Ascending aorta (tissue), 2 donors: ENCODE measurements at regions of chr5 and their contacts with region 1.

Region 1: DNA sequence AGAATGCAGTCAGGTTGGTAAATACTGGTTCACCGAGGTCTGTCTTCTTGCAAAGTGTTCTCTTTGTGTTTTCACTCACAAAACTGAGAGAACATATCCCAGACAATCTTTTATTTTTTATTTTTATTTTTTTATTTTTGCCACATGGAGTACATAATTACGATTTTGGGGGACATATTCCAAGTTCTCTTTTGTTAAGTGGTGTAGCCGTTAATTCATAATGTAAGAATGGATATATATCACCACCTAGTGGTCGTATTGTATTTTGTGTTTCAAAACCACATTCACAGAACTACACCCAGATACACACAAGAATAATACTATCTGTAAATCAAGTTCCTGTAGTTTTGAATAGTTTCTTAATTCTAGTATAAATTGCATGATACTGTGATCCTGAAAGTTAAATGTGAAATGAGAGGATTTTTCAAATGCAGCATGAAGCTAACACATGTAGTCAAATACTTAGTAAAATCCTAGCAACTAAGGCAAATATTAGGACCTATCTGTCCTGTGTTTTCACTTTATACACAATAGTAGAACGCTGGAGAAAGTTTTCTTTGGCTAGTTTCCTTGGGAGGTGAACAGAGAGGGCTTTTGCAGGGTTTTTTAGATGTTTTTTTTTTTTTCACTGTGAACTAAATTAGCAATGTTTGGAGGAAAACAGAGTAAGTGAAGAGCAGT is 92.7 kb downstream of the VCAN start:
- DNase-seq: no peak
- H3K4me3 ChIP-seq: no peak overlapping the region
- H3K27ac ChIP-seq: peak overlapping the region; percentile 19 to 77
- H3K4me1 ChIP-seq: peaks cover 8 to 52% of the 10 kb centered on the region in 2 donors
- H3K27me3 ChIP-seq: no peaks in the 10 kb centered on the region
- CTCF ChIP-seq: peak; percentile 51 to 67 (median 57)

Region 2: DNA sequence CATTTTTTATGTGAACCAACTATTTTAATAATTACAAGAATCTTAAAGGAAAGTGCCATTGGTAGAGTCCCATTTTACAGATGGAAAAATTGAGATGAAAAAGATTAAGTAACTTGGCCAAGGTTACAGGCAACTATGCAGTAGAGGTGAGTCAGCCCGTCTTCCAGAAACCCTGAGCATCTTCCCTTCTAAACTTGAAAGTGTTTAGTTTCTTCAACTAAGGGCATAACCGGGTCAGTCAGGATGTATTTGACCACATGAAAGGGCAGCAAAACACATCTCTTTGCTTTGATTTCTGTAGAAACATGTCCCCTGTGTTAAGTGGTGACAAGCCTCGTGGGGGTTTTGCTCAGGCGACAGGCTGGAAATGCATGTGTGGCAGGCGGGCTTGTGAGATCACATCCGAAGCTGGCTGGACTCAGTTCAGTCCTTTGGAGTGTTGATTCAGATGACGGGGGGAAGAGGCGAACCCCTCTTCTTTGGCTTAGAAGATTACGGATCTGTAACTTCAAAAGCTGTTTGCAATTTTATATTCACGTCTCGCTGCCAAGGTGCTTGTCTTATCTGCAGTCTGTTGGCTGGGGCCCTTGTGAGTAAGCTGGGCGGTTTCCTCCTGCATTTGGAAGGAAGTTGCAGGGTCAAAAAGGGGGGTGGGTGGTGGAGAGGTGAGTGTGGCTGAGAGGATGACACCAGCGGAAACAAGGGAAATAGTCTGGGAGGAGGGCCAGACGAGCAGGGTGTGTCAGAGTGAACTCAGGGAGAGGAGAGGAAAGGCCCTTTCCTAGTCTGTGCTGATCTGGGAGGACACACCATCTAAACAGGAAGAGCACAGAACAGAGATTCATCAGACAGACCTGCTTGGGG is 1207.2 kb before region 1 on chr5:
- intact Hi-C with region 1: loop called (anchors 5 kb)
- DNase-seq: peak; percentile 33 to 94
- H3K4me3 ChIP-seq: no peak overlapping the region
- H3K27ac ChIP-seq: peak overlapping the region; percentile 78 to 84
- H3K4me1 ChIP-seq: peaks cover 0 to 29% of the 10 kb centered on the region in 2 donors
- H3K27me3 ChIP-seq: no peaks in the 10 kb centered on the region
- CTCF ChIP-seq: no peak

Region 3: GRCh38 chr5:83076742-83077661 is 487.2 kb before region 1 on chr5 and contains the starts of genes TMEM167A and XRCC4:
- intact Hi-C with region 1: loop called (anchors 5 kb)
- DNase-seq: peak; percentile 94 to 98
- H3K4me3 ChIP-seq: peak within 1 kb of the TSS; percentile 86 to 94
- H3K27ac ChIP-seq: peak within 1 kb of the TSS; percentile 89 to 90
- H3K4me1 ChIP-seq: peaks cover 0 to 17% of the 10 kb centered on the region in 2 donors
- H3K27me3 ChIP-seq: no peaks in the 10 kb centered on the region
- CTCF ChIP-seq: no peak
- total RNA-seq, gene TMEM167A: 38.3 TPM
- total RNA-seq, gene XRCC4: not detected

Region 4: GRCh38 chr5:83306572-83307241 is 257.5 kb before region 1 on chr5:
- intact Hi-C with region 1: loop called (anchors 5 kb)
- DNase-seq: peak; percentile 51 to 83
- H3K4me3 ChIP-seq: no peak overlapping the region
- H3K27ac ChIP-seq: peak overlapping the region; percentile 72 to 76
- H3K4me1 ChIP-seq: peaks cover 0 to 8% of the 10 kb centered on the region in 2 donors
- H3K27me3 ChIP-seq: no peaks in the 10 kb centered on the region
- CTCF ChIP-seq: no peak